Activated CD4-positive, alpha-beta T cell treated with anti-CD3 and anti-CD28 coated beads for 36 hours (primary cell): ENCODE measurements at regions of chrX and their contacts with region 1.

Region 1: DNA sequence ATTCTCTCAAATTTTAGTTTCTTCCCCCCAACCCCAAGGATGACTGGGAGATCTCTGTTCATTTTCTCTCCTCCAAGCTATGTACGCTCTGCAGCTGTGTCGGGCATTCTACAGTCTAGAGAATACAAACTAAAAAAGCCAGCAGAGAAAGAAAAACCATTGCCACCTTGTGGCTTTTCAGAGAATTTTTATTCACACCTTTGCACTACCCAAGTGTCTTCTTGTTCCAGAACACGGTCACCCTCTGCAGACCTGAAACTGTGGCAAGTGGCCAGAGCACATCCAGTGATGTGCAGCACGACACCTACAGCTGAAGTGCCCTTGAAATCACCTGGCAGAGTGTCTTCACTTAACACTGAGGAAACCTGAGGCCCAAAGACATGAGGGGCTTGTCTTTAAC is 68.6 kb downstream of the CHST7 start:
- DNase-seq: peak; percentile 14
- ATAC-seq: peak; percentile 83
- H3K4me3 Mint-ChIP-seq: no peak overlapping the region
- H3K27ac Mint-ChIP-seq: no peak overlapping the region
- H3K4me1 Mint-ChIP-seq: peaks cover 16% of the 10 kb centered on the region
- H3K27me3 Mint-ChIP-seq: no peaks in the 10 kb centered on the region

Region 2: GRCh38 chrX:46554942-46555341 is 87.2 kb before region 1 on chrX:
- CTCF ChIA-PET with region 1: interaction called, 4 read pairs
- POLR2A ChIA-PET with region 1: no interaction called
- intact Hi-C with region 1: loop called in 1 of 2 experiments (anchors 1 kb)
- DNase-seq: no peak
- ATAC-seq: no peak
- H3K4me3 Mint-ChIP-seq: no peak overlapping the region
- H3K27ac Mint-ChIP-seq: no peak overlapping the region
- H3K4me1 Mint-ChIP-seq: no peaks in the 10 kb centered on the region
- H3K27me3 Mint-ChIP-seq: no peaks in the 10 kb centered on the region